Activated B cell treated with CpG ODN at 0.5 μM for 24 hours (primary cell): ENCODE measurements at regions of chr1 and their contacts with region 1.

Region 1: GRCh38 chr1:84143796-84144565 is at the start of gene PRKACB:
- DNase-seq: no peak
- ATAC-seq: peak; percentile 86
- H3K4me3 Mint-ChIP-seq: peak within 1 kb of the TSS; percentile 89
- H3K27ac Mint-ChIP-seq: peak within 1 kb of the TSS; percentile 97
- H3K4me1 Mint-ChIP-seq: peaks cover 52% of the 10 kb centered on the region
- H3K27me3 Mint-ChIP-seq: no peaks in the 10 kb centered on the region
- CTCF ChIP-seq: no peak
- total RNA-seq, gene PRKACB: 30.0 and 33.0 TPM in 2 replicates

Region 2: GRCh38 chr1:84192681-84193080 is 48.7 kb after region 1 on chr1:
- CTCF ChIA-PET with region 1: no interaction called
- POLR2A ChIA-PET with region 1: interaction called, 3 read pairs
- intact Hi-C with region 1: loop called (anchors 2 kb)
- DNase-seq: no peak
- ATAC-seq: no peak
- H3K4me3 Mint-ChIP-seq: no peak overlapping the region
- H3K27ac Mint-ChIP-seq: no peak overlapping the region
- H3K4me1 Mint-ChIP-seq: no peaks in the 10 kb centered on the region
- H3K27me3 Mint-ChIP-seq: no peaks in the 10 kb centered on the region
- CTCF ChIP-seq: no peak

Region 3: DNA sequence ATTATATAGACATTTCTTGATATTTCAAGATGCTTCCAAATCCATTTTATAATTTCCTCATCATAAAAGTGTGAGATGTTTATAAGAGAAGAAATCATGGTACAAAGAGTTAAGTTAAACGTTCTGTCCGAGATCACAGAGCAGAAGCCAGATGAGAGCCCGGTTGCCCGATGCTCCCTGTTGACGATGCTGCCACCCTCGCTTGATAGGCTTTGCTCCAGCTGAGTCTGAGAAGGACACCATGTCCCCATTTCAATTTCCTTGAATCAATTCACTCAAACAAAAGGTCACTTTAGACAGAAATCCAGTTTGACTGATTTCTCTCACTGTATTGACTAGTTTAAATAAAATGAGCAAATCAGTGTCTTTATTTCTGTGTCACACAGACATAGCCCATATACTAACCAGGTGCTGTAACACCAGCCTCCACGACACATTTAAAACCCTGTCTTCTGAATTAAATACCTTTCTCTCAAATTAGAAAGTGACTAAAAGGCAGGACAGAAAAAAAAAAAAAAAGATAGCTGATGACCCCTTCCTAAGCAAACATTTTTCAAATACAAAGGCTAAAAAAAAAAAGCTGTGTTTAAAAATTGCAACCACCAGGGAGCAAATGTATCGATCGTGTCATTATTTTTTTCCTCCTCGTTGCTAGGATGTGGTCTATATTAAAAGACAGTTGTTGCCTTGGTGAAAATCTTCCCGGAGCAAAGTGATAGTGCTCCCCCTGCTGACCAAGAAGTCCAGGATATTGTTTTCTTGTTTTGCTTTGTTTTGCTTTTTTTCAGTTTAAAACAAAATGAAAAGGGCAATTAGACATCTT is 289.5 kb after region 1 on chr1:
- CTCF ChIA-PET with region 1: interaction called, 76 read pairs
- POLR2A ChIA-PET with region 1: interaction called, 6 read pairs
- intact Hi-C with region 1: loop called (anchors 1 kb)
- DNase-seq: no peak
- ATAC-seq: peak; percentile 59
- H3K4me3 Mint-ChIP-seq: peak overlapping the region; percentile 65
- H3K27ac Mint-ChIP-seq: peak overlapping the region; percentile 15
- H3K4me1 Mint-ChIP-seq: peaks cover 9% of the 10 kb centered on the region
- H3K27me3 Mint-ChIP-seq: no peaks in the 10 kb centered on the region
- CTCF ChIP-seq: peak; percentile 48

Region 4: DNA sequence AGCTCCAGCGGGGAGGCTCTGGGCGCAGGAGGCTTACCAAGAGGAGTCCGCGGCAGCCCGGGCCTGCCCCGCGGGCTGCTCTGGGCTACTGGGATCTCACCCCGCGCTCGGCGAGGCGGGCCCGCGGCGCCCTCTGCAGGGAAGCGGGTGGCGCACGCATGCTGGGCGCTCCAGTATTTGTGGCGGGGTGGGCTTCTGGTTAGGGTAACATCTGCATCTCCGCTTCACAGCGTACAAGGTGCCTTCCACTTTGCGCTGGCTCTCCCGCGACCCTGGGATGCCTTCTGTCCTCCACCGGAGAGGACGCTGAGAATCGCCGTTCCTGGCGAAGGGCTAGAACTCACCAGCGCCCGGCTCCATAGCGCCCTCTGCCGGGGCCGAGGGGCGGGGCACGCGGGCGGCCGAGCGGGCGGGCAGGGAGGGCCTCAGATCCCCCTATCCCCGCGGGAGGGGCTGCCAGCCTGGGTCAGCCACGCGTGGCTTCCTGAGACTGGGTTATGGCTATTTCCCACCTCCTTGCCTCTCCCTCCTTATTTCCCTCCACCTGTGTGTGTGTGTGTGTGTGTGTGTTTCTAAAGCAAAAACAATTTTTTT is 476.8 kb after region 1 on chr1:
- CTCF ChIA-PET with region 1: interaction called, 8 read pairs
- POLR2A ChIA-PET with region 1: interaction called, 5 read pairs
- intact Hi-C with region 1: loop called (anchors 1 kb)
- DNase-seq: peak; percentile 91
- ATAC-seq: peak; percentile 93
- H3K4me3 Mint-ChIP-seq: peak overlapping the region; percentile 95
- H3K27ac Mint-ChIP-seq: peak overlapping the region; percentile 82
- H3K4me1 Mint-ChIP-seq: peaks cover 2% of the 10 kb centered on the region
- H3K27me3 Mint-ChIP-seq: peaks cover 8% of the 10 kb centered on the region
- CTCF ChIP-seq: peak; percentile 99

Region 5: GRCh38 chr1:84753516-84754385 is 609.8 kb after region 1 on chr1:
- CTCF ChIA-PET with region 1: interaction called, 27 read pairs
- POLR2A ChIA-PET with region 1: no interaction called
- intact Hi-C with region 1: loop called (anchors 1 kb)
- DNase-seq: peak; percentile 34
- ATAC-seq: peak; percentile 81
- H3K4me3 Mint-ChIP-seq: no peak overlapping the region
- H3K27ac Mint-ChIP-seq: no peak overlapping the region
- H3K4me1 Mint-ChIP-seq: peaks cover 4% of the 10 kb centered on the region
- H3K27me3 Mint-ChIP-seq: peaks cover 22% of the 10 kb centered on the region
- CTCF ChIP-seq: peak; percentile 51